CD8-positive, alpha-beta T cell (primary cell): ENCODE measurements at regions of chr2 and their contacts with region 1.

Region 1: GRCh38 chr2:32502941-32503340 is 124.9 kb upstream of the TTC27 start:
- DNase-seq: no peak
- ATAC-seq: no peak
- H3K4me3 ChIP-seq: no peak overlapping the region
- H3K4me3 Mint-ChIP-seq: no peak overlapping the region
- H3K27ac ChIP-seq: no peak overlapping the region
- H3K27ac Mint-ChIP-seq: no peak overlapping the region
- H3K4me1 ChIP-seq: no peaks in the 10 kb centered on the region
- H3K4me1 Mint-ChIP-seq: no peaks in the 10 kb centered on the region
- H3K27me3 ChIP-seq: no peaks in the 10 kb centered on the region
- H3K27me3 Mint-ChIP-seq: no peaks in the 10 kb centered on the region
- CTCF ChIP-seq: no peak

Region 2: GRCh38 chr2:32402091-32402490 is 100.8 kb before region 1 on chr2:
- CTCF ChIA-PET with region 1: no interaction called
- POLR2A ChIA-PET with region 1: no interaction called
- intact Hi-C with region 1: loop called in 1 of 2 experiments (anchors 10 kb)
- DNase-seq: no peak
- ATAC-seq: no peak
- H3K4me3 ChIP-seq: no peak overlapping the region
- H3K4me3 Mint-ChIP-seq: no peak overlapping the region
- H3K27ac ChIP-seq: peak overlapping the region in 1 of 2 experiments; percentile 5
- H3K27ac Mint-ChIP-seq: peak overlapping the region; percentile 33
- H3K4me1 ChIP-seq: no peaks in the 10 kb centered on the region
- H3K4me1 Mint-ChIP-seq: peaks cover 8% of the 10 kb centered on the region
- H3K27me3 ChIP-seq: no peaks in the 10 kb centered on the region
- H3K27me3 Mint-ChIP-seq: no peaks in the 10 kb centered on the region
- CTCF ChIP-seq: no peak

Region 3: GRCh38 chr2:32464431-32464830 is 38.5 kb before region 1 on chr2:
- CTCF ChIA-PET with region 1: no interaction called
- POLR2A ChIA-PET with region 1: no interaction called
- intact Hi-C with region 1: loop called in 1 of 2 experiments (anchors 5 kb)
- DNase-seq: no peak
- ATAC-seq: no peak
- H3K4me3 ChIP-seq: no peak overlapping the region
- H3K4me3 Mint-ChIP-seq: no peak overlapping the region
- H3K27ac ChIP-seq: no peak overlapping the region
- H3K27ac Mint-ChIP-seq: no peak overlapping the region
- H3K4me1 ChIP-seq: no peaks in the 10 kb centered on the region
- H3K4me1 Mint-ChIP-seq: no peaks in the 10 kb centered on the region
- H3K27me3 ChIP-seq: no peaks in the 10 kb centered on the region
- H3K27me3 Mint-ChIP-seq: no peaks in the 10 kb centered on the region
- CTCF ChIP-seq: no peak

Region 4: GRCh38 chr2:32484937-32485336 is 18.0 kb before region 1 on chr2:
- CTCF ChIA-PET with region 1: no interaction called
- POLR2A ChIA-PET with region 1: no interaction called
- intact Hi-C with region 1: no loop called
- DNase-seq: peak in 1 of 9 experiments; percentile 24
- ATAC-seq: no peak
- H3K4me3 ChIP-seq: no peak overlapping the region
- H3K4me3 Mint-ChIP-seq: no peak overlapping the region
- H3K27ac ChIP-seq: no peak overlapping the region
- H3K27ac Mint-ChIP-seq: no peak overlapping the region
- H3K4me1 ChIP-seq: no peaks in the 10 kb centered on the region
- H3K4me1 Mint-ChIP-seq: no peaks in the 10 kb centered on the region
- H3K27me3 ChIP-seq: no peaks in the 10 kb centered on the region
- H3K27me3 Mint-ChIP-seq: no peaks in the 10 kb centered on the region
- CTCF ChIP-seq: no peak